A549 (cell line): ENCODE measurements at regions of chr19 and their contacts with region 1.

Region 1: DNA sequence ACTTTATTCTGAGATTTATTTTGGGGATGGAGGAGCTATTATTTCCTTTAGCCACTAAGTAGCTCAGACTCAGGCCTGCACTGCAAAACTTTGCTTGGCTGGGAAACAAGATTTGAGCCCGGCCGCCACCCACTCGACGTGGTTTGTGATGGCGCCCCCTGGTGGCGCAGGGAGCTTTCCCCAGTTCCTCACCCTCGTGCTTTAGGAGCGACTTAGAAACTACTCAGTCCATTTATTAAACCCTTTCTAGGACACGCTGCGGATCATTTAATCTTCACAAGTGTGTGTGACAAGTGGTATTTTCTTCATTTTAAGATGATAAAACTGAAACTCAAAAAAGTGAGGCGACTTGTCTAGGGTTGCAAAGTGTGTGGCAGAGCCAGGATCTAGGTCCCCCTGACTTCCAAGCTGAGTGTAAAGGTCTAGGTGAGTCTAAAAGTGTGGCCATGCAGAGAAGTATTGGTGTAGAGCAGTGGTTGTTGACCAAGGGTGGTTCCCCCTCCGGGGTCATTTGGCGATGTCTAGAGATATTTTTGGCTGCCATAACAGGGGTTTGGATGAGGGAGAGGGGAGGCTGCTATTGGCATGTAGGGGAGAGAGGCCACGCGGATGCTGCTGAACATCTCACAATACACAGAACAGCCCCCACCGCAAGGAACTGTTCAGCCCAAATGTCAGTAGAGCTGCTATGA is 2.2 kb downstream of the CXCL17 start:
- DNase-seq: peak; percentile 87 to 95
- ATAC-seq: peak; percentile 73 to 85
- H3K4me3 ChIP-seq: no peak overlapping the region
- H3K27ac ChIP-seq: no peak overlapping the region
- H3K4me1 ChIP-seq: peaks cover 30% of the 10 kb centered on the region
- CTCF ChIP-seq: peak; percentile 99
- EP300 ChIP-seq: no peak
- POLR2A ChIP-seq: no peak
- RAD21 ChIP-seq: peak; percentile 38 to 50

Region 2: GRCh38 chr19:42313096-42313839 is 127.2 kb before region 1 on chr19 and contains the start of gene TMEM145:
- CTCF ChIA-PET with region 1: no interaction called
- POLR2A ChIA-PET with region 1: no interaction called
- DNase-seq: peak; percentile 67 to 92
- ATAC-seq: peak; percentile 67 to 82
- H3K4me3 ChIP-seq: peak within 1 kb of the TSS; percentile 51
- H3K27ac ChIP-seq: peak within 1 kb of the TSS; percentile 32 to 79; a peak in 5 of 6 replicates
- H3K4me1 ChIP-seq: peaks cover 5% of the 10 kb centered on the region; the same call in 1 of the 3 replicates
- CTCF ChIP-seq: peak; percentile 36
- EP300 ChIP-seq: no peak
- POLR2A ChIP-seq: no peak
- RAD21 ChIP-seq: no peak; a peak in 1 of 5 replicates
- polyA plus RNA-seq, gene TMEM145: 0.71 and 1.8 TPM in 2 replicates

Region 3: DNA sequence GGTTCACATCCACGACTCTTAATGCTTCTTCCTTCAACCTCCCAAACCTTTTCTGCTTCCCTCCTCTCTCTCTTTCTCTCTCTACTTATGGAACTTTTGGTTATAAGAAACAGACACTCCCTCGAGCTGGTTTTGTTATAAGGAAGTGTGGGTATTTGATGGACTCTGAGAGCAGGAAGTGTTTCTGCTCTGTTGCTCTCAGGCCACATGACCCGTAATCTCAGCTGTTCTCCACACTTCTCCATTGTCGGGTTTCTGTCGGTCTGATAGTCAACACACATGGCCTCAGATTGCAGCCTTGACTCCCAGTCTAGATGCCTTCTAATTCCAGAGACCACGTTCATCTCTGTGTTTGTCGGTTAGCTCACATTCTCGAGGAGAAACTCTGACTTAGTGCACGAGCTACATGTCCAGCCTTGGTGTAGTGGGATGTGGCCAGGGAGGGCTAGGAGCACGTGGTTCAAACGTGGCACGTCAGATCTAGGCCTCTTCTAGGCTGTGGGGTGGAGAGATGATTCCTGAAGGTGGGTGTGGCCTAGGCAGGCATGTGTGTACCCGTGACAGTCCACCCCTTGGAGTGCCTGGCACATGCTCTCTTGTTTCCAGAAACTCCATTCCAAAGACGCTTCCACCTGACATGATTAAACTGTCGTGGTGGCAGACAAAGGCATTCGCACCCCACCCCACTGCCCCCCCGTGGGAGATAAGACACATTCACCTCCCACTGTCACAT is 76.7 kb before region 1 on chr19:
- CTCF ChIA-PET with region 1: no interaction called
- POLR2A ChIA-PET with region 1: no interaction called
- DNase-seq: peak in 1 of 2 experiments; percentile 65
- ATAC-seq: no peak
- H3K4me3 ChIP-seq: no peak overlapping the region
- H3K27ac ChIP-seq: no peak overlapping the region
- H3K4me1 ChIP-seq: no peaks in the 10 kb centered on the region
- CTCF ChIP-seq: no peak
- EP300 ChIP-seq: no peak
- POLR2A ChIP-seq: no peak; the same call in 1 of the 2 replicates
- RAD21 ChIP-seq: no peak

Region 4: DNA sequence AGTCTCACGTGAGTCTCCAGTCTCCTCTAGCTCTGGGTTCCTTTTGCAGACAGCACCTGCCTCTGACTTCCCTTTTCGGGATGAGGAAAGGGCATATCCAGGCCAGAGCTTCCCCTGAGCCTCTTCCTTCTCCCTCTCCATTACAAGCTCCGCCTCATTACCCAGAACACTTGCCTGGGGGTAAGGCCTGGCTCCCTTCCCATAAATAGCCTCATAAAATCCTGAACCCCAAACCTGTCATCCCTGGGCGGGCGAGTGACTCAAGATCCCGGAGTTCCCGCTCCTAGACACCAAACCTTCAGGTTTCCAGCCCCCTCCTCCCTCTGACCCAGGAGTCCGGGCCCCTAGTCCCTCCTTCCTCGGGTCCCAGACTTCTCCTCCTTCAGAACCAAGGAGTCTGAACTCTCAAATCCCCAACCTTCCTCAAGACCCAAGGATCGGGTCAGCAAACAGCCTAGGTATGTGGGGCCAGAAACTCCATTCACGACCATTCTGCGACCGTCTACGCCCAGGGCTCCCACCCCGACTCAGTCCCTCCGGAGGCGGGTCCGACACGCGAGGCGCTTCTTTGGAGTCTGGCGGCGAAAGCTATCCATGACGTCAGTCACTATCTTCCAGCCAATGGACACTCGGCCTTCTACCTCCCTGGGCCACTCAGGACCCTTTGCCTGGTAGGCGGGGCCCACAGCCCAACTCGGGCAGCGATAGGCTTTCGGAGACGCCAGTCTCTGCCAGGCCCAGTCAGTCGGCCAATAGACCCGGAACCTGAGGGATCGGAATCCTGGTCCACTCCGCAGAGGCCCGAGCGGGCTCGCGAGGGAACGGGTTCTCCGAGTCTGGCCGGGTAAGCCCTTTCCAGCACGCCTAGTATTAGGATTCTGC is 43.9 kb before region 1 on chr19:
- CTCF ChIA-PET with region 1: interaction called, 23 read pairs
- POLR2A ChIA-PET with region 1: no interaction called
- DNase-seq: peak; percentile 100
- ATAC-seq: peak; percentile 86 to 97
- H3K4me3 ChIP-seq: peak overlapping the region; percentile 62
- H3K27ac ChIP-seq: peak overlapping the region; percentile 79 to 87
- H3K4me1 ChIP-seq: peaks cover 20% of the 10 kb centered on the region
- CTCF ChIP-seq: no peak
- EP300 ChIP-seq: no peak
- POLR2A ChIP-seq: peak; percentile 93
- RAD21 ChIP-seq: no peak

Region 5: GRCh38 chr19:42412227-42412626 is 28.3 kb before region 1 on chr19:
- CTCF ChIA-PET with region 1: interaction called, 56 read pairs
- POLR2A ChIA-PET with region 1: no interaction called
- DNase-seq: no peak
- ATAC-seq: peak; percentile 12; a peak in 4 of 6 replicates
- H3K4me3 ChIP-seq: no peak overlapping the region
- H3K27ac ChIP-seq: no peak overlapping the region
- H3K4me1 ChIP-seq: no peaks in the 10 kb centered on the region
- CTCF ChIP-seq: no peak
- EP300 ChIP-seq: no peak
- POLR2A ChIP-seq: no peak
- RAD21 ChIP-seq: no peak

Region 6: DNA sequence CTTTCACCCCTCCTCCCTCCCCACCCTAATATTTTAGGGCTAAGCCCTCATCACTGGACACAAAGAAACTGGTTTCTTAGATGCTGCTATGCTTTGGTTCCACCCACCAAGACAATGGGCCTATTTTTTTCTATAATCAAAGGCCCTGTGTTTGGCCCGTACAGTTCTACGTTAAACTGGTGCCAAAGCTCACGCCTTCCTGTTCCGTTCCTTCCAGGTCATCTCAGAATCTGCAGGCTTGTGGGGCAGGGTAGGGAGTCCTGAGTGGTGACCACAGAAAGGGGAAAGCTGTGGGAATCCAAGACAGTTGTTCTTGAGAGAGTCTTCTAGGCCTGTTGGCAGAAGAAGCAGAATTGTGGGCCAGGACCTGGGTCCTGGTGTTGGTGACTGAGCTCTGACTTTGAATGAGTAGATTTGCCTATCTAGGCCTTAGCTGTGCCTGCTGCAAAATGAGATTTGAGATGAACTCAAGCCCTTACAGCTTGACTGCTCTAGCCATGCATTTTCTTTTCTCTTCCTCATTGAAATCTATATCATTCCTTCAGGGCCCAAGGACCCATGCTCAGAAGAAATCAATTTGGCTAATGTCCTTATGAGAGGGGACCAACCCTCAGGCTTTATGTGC is 21.3 kb after region 1 on chr19:
- CTCF ChIA-PET with region 1: interaction called, 153 read pairs
- POLR2A ChIA-PET with region 1: no interaction called
- DNase-seq: no peak
- ATAC-seq: no peak
- H3K4me3 ChIP-seq: no peak overlapping the region
- H3K27ac ChIP-seq: no peak overlapping the region
- H3K4me1 ChIP-seq: no peaks in the 10 kb centered on the region
- CTCF ChIP-seq: no peak
- EP300 ChIP-seq: no peak
- POLR2A ChIP-seq: no peak
- RAD21 ChIP-seq: no peak

Region 7: GRCh38 chr19:42474743-42475142 is 34.2 kb after region 1 on chr19:
- CTCF ChIA-PET with region 1: interaction called, 29 read pairs
- POLR2A ChIA-PET with region 1: no interaction called
- DNase-seq: no peak
- ATAC-seq: no peak
- H3K4me3 ChIP-seq: no peak overlapping the region
- H3K27ac ChIP-seq: no peak overlapping the region
- H3K4me1 ChIP-seq: peaks cover 12% of the 10 kb centered on the region
- CTCF ChIP-seq: no peak
- EP300 ChIP-seq: no peak
- POLR2A ChIP-seq: no peak
- RAD21 ChIP-seq: no peak